Activated T-helper 1 cell treated with anti-CD3 and anti-CD28 coated beads, Interleukin-12 subunit alpha, Interleukin-12 subunit beta, Interleukin-2, Interleukin-4 antibody, amounts not matched to agents 30 ng/mL and 10 ng/mL and 1 ng/mL, durations not matched to agents 14 hours and 24 hours and 36 hours (primary cell): ENCODE measurements at regions of chr3 and their contacts with region 1.

Region 1: GRCh38 chr3:72447059-72447946 is 400.9 kb downstream of the SHQ1 start:
- DNase-seq: peak; percentile 93
- H3K4me3 Mint-ChIP-seq: peak overlapping the region; percentile 71
- H3K27ac Mint-ChIP-seq: peak overlapping the region; percentile 80
- H3K4me1 Mint-ChIP-seq: peaks cover 50% of the 10 kb centered on the region
- H3K27me3 Mint-ChIP-seq: peaks cover 1% of the 10 kb centered on the region

Region 2: DNA sequence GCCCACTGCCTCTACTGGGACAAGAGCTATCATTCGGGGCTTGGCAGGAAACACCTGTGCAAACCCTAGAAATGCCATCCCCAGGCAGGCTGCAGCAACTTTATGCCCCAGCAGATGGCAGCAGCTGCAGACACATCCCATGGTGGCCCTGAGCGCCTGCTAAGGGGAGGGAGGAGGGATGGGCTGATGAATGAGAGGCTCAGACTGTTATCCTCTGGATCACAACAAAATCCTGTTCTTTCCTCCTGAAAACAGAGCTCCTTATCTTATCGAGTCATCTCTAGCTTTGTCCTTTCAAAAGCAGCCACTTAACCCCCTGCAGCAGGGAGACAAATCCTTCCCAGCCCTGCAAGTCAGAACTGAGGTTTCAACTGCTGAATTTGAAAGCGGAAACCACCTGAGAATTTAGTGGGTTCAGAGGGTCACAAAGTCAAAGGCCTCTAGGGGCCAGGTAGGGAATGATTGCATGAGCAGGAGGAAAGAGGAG is 571.8 kb before region 1 on chr3:
- intact Hi-C with region 1: loop called (anchors 2 kb)
- DNase-seq: peak; percentile 67
- H3K4me3 Mint-ChIP-seq: no peak overlapping the region
- H3K27ac Mint-ChIP-seq: peak overlapping the region; percentile 59
- H3K4me1 Mint-ChIP-seq: peaks cover 38% of the 10 kb centered on the region
- H3K27me3 Mint-ChIP-seq: peaks cover 8% of the 10 kb centered on the region

Region 3: DNA sequence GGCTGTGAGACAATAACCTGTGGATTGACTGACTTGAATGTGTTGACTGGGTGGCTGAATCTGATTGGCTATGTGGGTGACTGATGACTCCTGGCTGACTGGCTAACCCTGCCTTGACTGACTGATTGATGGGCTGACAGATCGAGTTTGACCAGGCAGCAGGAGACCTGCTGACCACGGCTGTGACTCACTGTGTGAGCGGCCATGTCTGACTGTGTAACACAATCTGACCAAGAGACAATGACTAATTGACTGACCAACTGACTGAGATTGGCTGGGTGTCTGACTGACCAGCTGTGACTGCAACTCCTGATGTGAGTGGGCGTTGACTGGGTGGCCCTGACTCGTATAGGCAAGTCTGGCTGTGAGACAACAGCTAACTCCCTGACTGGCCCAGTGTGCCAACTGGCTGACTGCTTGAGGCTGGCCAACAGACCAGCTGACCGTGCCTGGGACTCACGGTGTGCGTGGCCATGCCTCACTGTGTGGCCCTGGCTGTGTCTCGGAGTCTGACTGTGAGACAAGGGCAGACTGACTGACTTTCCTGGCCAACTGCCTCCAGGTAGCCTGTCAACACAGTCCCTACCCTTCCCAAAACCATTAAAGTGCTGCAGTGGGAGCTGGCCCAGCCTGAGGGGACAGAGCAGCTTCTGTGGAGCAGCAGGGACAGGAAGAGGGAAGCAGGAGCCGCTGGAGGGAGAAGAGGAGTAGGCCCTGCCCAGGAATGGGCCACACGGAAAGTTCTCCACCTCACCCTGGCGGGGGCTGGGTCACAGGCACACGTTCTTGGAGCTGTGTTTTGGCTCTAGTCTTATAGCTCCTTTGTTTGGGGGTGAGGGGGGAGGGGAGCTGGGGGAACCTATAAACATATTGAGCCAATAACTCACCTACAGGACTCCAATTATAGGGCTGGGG is 107.9 kb before region 1 on chr3:
- intact Hi-C with region 1: loop called (anchors 2 kb)
- DNase-seq: no peak
- H3K4me3 Mint-ChIP-seq: no peak overlapping the region
- H3K27ac Mint-ChIP-seq: no peak overlapping the region
- H3K4me1 Mint-ChIP-seq: peaks cover 32% of the 10 kb centered on the region
- H3K27me3 Mint-ChIP-seq: peaks cover under 1% of the 10 kb centered on the region

Region 4: GRCh38 chr3:72458358-72458757 is 11.1 kb after region 1 on chr3:
- intact Hi-C with region 1: loop called (anchors 1 kb)
- DNase-seq: no peak
- H3K4me3 Mint-ChIP-seq: no peak overlapping the region
- H3K27ac Mint-ChIP-seq: no peak overlapping the region
- H3K4me1 Mint-ChIP-seq: peaks cover 19% of the 10 kb centered on the region
- H3K27me3 Mint-ChIP-seq: peaks cover 6% of the 10 kb centered on the region

Region 5: GRCh38 chr3:72482589-72483321 is 35.5 kb after region 1 on chr3:
- intact Hi-C with region 1: loop called (anchors 1 kb)
- DNase-seq: peak; percentile 47
- H3K4me3 Mint-ChIP-seq: peak overlapping the region; percentile 68
- H3K27ac Mint-ChIP-seq: peak overlapping the region; percentile 94
- H3K4me1 Mint-ChIP-seq: peaks cover 73% of the 10 kb centered on the region
- H3K27me3 Mint-ChIP-seq: no peaks in the 10 kb centered on the region

Region 6: DNA sequence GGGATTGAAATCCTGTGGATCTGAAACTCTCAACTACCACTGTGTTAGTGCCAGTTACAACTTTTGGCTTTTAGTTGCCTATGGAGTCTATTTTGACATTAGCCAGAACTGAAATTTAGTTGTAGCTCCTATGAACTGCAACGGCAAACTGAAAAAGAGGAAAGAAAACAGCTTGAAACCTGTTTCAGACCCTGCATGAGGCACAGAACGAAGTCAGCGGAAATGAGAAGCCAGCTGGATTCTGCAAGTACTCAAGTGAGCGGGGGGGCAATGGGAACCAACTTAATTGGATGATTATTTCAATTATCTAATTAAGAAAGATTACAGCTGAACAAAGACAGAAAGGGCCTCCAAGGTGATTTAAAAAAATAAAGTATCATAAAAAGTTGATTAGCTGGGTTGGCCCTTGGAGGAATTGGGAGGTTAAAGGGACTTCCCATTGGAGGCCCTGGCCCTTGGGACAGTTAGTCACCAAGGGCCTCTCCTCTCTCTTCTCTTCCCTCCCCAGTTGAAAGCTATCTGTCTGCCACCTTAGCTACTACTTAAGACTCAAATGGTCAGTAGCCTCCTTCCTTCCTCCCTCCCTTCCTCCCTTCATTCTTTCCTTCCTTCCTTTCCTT is 48.9 kb after region 1 on chr3:
- intact Hi-C with region 1: no loop called
- DNase-seq: no peak
- H3K4me3 Mint-ChIP-seq: no peak overlapping the region
- H3K27ac Mint-ChIP-seq: no peak overlapping the region
- H3K4me1 Mint-ChIP-seq: no peaks in the 10 kb centered on the region
- H3K27me3 Mint-ChIP-seq: no peaks in the 10 kb centered on the region

Region 7: DNA sequence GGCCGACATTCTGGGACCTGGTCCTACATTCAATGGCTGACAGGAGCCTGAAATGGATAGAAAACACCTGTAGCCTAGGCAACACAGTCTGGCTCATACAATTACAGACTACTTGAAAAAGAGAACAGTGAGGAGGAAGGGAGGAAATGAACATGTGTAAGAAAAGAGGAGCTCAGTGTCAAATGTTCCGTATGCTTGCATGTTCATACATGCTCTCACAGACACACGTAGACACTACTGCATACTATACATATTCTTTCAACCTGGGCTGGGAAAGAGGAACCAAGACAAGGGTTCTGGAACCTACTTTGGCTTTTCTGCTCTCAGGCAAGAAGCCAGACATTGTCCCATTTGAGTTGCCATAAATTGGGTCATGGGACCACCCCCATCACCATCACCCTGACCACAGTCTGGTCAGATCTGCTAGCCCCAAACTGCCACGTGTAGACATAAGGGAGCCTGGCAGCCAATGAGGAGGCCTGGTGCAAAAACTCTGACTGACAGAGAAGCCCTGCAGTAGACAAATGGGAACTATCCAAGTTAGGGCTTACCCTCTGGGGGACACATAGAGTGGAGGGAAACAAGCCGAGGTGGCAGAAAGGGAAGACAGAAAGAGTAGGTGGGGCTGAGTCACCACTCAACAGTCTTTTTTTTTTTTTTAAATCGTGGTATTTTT is 90.9 kb after region 1 on chr3:
- intact Hi-C with region 1: loop called (anchors 5 kb)
- DNase-seq: no peak
- H3K4me3 Mint-ChIP-seq: no peak overlapping the region
- H3K27ac Mint-ChIP-seq: peak overlapping the region; percentile 36
- H3K4me1 Mint-ChIP-seq: peaks cover 45% of the 10 kb centered on the region
- H3K27me3 Mint-ChIP-seq: peaks cover 3% of the 10 kb centered on the region

Region 8: DNA sequence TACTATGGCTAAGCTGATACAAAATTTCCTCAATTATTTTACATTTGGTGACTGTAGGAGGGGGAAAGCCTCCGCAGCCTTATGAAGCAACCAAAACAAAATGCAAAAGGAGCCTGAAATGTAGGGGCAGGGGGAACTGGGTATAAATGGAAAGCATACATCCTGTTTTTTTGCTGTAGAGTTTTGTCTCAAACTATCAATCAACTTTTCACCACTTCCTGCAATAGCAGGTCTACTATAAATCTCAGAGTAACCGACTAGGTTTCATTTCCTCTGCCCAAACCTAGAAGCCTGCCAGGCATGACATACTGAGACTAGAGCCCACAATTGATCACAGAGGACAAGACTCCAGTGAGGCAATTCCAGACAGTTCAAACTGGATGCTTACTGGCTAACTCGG is 309.6 kb after region 1 on chr3:
- intact Hi-C with region 1: loop called (anchors 1 kb)
- DNase-seq: peak; percentile 38
- H3K4me3 Mint-ChIP-seq: peak overlapping the region; percentile 34
- H3K27ac Mint-ChIP-seq: peak overlapping the region; percentile 64
- H3K4me1 Mint-ChIP-seq: peaks cover 50% of the 10 kb centered on the region
- H3K27me3 Mint-ChIP-seq: no peaks in the 10 kb centered on the region